SK-N-SH (cell line): ENCODE measurements at regions of chr11 and their contacts with region 1.

Region 1: GRCh38 chr11:6377902-6378639 is 12.2 kb upstream of the SMPD1 start:
- DNase-seq: no peak
- H3K4me3 ChIP-seq: no peak overlapping the region
- H3K27ac ChIP-seq: no peak overlapping the region
- H3K4me1 ChIP-seq: no peaks in the 10 kb centered on the region; a peak in 1 of 4 replicates
- H3K27me3 ChIP-seq: no peaks in the 10 kb centered on the region; the same call in 1 of the 2 replicates
- CTCF ChIP-seq: no peak
- EP300 ChIP-seq: no peak
- RAD21 ChIP-seq: no peak

Region 2: DNA sequence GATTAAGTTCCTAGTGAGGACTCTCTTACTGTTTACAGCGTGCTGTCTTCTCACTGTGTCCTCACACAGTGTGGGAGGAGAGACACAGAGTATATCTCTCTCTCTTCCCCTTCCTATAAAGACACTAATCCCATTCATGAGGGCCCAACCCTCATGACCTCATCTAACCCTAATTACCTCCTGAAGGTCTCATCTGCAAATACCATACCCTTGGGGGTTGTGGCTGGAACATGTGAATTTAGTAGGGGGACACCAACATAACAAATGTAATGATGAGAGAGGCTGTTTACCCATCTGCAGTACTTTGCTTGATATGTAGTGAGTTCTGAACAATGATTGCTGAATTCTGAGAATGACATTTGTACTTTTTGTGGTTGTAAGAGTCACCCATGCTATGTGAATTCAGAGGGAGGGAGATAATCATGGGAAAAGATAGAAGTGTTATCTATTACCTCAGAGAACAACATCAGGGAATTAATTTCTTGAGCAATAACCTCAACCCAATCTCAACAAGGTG is 183.9 kb before region 1 on chr11:
- CTCF ChIA-PET with region 1: no interaction called
- POLR2A ChIA-PET with region 1: no interaction called
- DNase-seq: no peak
- H3K4me3 ChIP-seq: no peak overlapping the region
- H3K27ac ChIP-seq: no peak overlapping the region
- H3K4me1 ChIP-seq: no peaks in the 10 kb centered on the region
- H3K27me3 ChIP-seq: no peaks in the 10 kb centered on the region
- CTCF ChIP-seq: no peak
- EP300 ChIP-seq: no peak
- RAD21 ChIP-seq: no peak

Region 3: GRCh38 chr11:6362873-6363678 is 15.0 kb before region 1 on chr11:
- CTCF ChIA-PET with region 1: interaction called, 64 read pairs
- POLR2A ChIA-PET with region 1: no interaction called
- DNase-seq: peak; percentile 74
- H3K4me3 ChIP-seq: no peak overlapping the region; a peak in 1 of 4 replicates
- H3K27ac ChIP-seq: no peak overlapping the region
- H3K4me1 ChIP-seq: no peaks in the 10 kb centered on the region
- H3K27me3 ChIP-seq: no peaks in the 10 kb centered on the region; the same call in 1 of the 2 replicates
- CTCF ChIP-seq: peak; percentile 89
- EP300 ChIP-seq: no peak
- RAD21 ChIP-seq: peak; percentile 77

Region 4: DNA sequence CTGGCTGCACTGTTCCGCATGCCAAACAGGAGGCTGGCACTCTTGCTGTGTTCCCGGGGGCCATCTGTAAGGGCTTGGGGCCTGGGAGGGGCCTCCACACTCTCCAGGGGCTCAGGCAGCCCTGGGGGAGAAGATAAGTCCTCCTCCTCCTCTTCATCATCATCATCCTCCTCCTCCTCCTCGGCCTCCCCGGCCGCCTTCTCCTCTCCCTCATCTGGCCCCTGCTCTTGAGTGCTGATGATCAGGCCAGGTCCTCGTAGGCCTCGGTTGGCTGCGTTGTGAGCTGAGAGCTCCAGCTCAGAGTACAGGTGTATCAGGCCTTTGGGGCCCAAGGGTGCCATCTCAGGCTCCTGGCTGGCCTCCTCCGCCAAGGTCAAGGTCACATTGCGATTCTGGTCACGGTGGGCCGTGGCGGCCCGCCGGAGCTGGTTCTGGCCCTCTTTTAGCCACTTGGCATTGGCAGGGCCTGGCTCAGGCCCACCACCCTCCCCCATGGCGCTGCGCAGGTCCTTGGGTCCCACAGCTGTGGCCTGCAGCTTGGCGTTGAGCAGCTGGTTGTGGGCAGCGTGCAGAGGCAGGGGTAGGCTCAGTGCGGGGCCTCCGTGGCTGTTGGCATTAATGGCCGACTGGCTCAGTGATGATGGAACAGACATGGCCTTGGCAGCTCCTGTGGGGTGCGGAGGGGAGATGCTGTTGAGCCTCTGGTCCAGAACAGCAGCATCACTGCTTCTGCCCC is 32.8 kb after region 1 on chr11:
- CTCF ChIA-PET with region 1: interaction called, 17 read pairs
- POLR2A ChIA-PET with region 1: no interaction called
- DNase-seq: no peak
- H3K4me3 ChIP-seq: no peak overlapping the region
- H3K27ac ChIP-seq: no peak overlapping the region
- H3K4me1 ChIP-seq: peaks cover 0 to 3% of the 10 kb centered on the region in 2 experiments; a peak in 1 of 4 replicates
- H3K27me3 ChIP-seq: no peaks in the 10 kb centered on the region
- CTCF ChIP-seq: no peak
- EP300 ChIP-seq: no peak
- RAD21 ChIP-seq: no peak

Region 5: DNA sequence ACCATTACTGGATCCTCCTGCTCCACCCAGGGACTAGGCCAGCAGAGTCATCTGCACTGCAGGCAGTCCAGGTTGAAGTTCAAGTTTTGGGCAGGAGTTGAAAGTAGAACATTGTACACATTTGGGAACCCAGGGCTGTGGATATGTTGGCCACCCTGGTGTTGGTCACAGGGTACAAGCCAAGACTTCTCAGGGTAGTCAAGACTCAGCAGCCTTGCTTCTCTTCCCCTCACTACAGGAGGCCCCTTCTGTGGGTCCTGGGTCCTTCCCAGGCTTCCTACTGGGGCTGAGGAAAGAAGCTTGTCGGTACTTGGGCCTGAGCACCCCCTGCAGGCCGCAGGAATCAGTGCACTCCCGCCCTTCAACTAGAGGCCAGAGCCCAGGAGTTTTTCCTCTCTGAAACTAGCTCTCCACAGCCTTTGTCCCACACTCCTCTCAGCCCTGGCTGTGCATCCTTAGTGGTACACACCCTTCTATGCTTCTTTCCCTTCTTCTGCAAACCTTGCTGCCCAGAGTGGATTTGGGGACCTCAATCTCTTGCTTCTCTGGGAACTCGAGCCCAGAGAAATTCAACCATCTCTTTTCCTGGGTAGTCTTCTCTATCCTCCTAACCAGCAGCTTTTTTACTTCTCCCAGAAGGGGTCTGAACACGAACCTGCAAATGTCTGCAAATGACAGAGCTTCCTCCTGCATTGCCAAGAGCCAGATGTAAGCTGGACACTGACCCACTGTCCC is 65.4 kb after region 1 on chr11:
- CTCF ChIA-PET with region 1: interaction called, 360 read pairs
- POLR2A ChIA-PET with region 1: interaction called, 5 read pairs
- DNase-seq: peak; percentile 78
- H3K4me3 ChIP-seq: no peak overlapping the region
- H3K27ac ChIP-seq: no peak overlapping the region
- H3K4me1 ChIP-seq: peaks cover 0 to 18% of the 10 kb centered on the region in 2 experiments; a peak in 1 of 4 replicates
- H3K27me3 ChIP-seq: no peaks in the 10 kb centered on the region
- CTCF ChIP-seq: peak; percentile 77
- EP300 ChIP-seq: no peak
- RAD21 ChIP-seq: peak; percentile 73

Region 6: GRCh38 chr11:6531267-6531752 is 153.2 kb after region 1 on chr11:
- CTCF ChIA-PET with region 1: interaction called, 19 read pairs
- POLR2A ChIA-PET with region 1: interaction called, 3 read pairs
- DNase-seq: peak; percentile 61
- H3K4me3 ChIP-seq: no peak overlapping the region
- H3K27ac ChIP-seq: no peak overlapping the region
- H3K4me1 ChIP-seq: peaks cover 0 to 3% of the 10 kb centered on the region in 2 experiments; a peak in 2 of 4 replicates
- H3K27me3 ChIP-seq: no peaks in the 10 kb centered on the region
- CTCF ChIP-seq: peak; percentile 91
- EP300 ChIP-seq: no peak
- RAD21 ChIP-seq: peak; percentile 85

Region 7: GRCh38 chr11:7222619-7223018 is 844.5 kb after region 1 on chr11:
- CTCF ChIA-PET with region 1: no interaction called
- POLR2A ChIA-PET with region 1: no interaction called
- DNase-seq: no peak
- H3K4me3 ChIP-seq: no peak overlapping the region
- H3K27ac ChIP-seq: no peak overlapping the region
- H3K4me1 ChIP-seq: no peaks in the 10 kb centered on the region; a peak in 1 of 4 replicates
- H3K27me3 ChIP-seq: no peaks in the 10 kb centered on the region
- CTCF ChIP-seq: no peak
- EP300 ChIP-seq: no peak
- RAD21 ChIP-seq: no peak